Heart left ventricle (tissue), 16 donors: ENCODE measurements at regions of chr4 and their contacts with region 1.

Region 1: GRCh38 chr4:127809173-127809800 is 27.2 kb downstream of the HSPA4L start:
- DNase-seq: no peak
- ATAC-seq: no peak
- H3K4me3 ChIP-seq: no peak overlapping the region
- H3K27ac ChIP-seq: no peak overlapping the region
- H3K4me1 ChIP-seq: no peaks in the 10 kb centered on the region
- H3K27me3 ChIP-seq: no peaks in the 10 kb centered on the region
- CTCF ChIP-seq: peak in 1 of 12 donors; percentile 3
- POLR2A ChIP-seq: no peak

Region 2: DNA sequence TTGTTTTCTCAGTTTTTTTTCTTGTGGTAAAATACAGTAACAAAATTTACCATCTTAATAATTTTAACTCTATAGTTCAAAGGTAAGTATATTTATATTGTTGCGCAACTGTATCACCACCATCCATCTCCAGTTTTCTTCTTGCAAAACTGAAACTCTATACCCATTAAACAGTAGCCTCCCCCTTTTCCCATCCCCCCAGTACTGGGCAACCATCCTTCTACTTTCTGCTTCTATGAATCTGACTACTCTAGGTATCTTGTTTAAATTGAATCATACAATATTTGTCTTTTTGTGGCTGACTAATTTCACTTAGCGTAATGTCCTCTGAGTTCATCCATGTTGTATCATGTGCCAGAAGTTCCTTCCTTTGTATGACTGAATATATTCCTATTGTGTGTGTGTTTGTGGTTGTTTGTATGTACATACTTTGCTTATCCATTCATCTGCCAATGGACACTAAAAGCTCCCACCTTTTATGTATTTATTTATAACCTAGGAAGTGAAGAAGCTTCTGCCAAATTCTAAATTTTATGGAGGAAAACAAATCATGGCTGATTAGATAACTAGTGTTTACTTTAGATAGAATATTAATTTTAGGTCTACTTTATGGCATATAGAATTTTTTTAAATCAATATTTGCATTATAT is 166.0 kb after region 1 on chr4:
- intact Hi-C with region 1: loop called in 1 of 10 experiments (anchors 10 kb)
- DNase-seq: no peak
- ATAC-seq: no peak
- H3K4me3 ChIP-seq: no peak overlapping the region
- H3K27ac ChIP-seq: no peak overlapping the region
- H3K4me1 ChIP-seq: peaks cover 0 to 15% (median 0%) of the 10 kb centered on the region in 12 donors
- H3K27me3 ChIP-seq: no peaks in the 10 kb centered on the region
- CTCF ChIP-seq: no peak
- POLR2A ChIP-seq: no peak